ENCODE measurements at regions of chr13 and their contacts with region 1.

Region 1: GRCh38 chr13:114065141-114065925 is 67.1 kb downstream of the RASA3 start:
- DNase-seq: peak; percentile 67 to 87 (median 70)
- ATAC-seq: peak; percentile 94
- H3K4me3 ChIP-seq: peak overlapping the region; percentile 42
- H3K27ac ChIP-seq: peak overlapping the region; percentile 93
- H3K4me1 ChIP-seq: peaks cover 17 to 55% of the 10 kb centered on the region in 2 experiments
- H3K27me3 ChIP-seq: no peaks in the 10 kb centered on the region
- CTCF ChIP-seq: no peak
- EP300 ChIP-seq: 0 out of 2 replicates have a peak, but pooled peaks have one; percentile 12
- POLR2A ChIP-seq: peak; percentile 65; the same call in 1 of the 2 replicates
- RAD21 ChIP-seq: no peak

Region 2: DNA sequence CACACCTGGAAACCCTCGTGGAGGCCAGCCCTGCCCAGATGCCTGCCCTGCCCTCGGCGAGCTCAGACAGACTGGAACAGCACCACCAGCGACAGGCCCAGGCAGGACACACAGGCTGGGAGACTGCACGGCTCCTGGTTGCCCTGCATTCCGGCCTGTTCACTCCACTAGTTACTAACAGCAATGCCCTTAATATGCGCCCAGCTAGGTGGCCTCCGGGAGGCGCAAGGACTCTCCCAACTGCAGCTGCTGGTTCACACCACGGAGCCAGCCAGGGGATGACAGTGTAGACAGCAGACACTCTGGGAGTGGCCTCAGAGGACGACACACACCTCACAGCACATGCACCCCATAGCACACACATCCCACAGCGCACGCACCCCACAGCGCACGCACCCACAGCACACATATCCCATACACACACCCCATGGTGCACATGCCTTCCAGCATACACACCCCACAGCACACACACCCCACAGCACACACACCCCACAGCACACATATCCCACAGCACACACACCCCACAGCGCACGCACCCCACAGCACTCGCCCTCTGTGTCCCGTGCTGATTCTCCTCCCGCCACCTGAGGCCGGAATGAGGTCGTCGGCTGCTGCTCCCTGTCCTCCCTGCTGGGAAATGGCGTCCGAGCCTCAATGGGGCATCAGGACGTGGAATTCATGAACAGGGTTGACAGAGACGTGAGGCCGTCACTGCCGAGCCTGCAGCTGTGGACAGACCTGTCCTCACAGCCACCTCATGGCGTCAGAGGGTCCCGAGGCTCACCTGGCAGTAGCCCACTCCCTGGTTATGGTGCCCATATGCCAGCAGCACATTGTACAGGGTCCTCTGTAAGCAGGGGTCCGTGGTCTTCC is 715.0 kb before region 1 on chr13:
- CTCF ChIA-PET with region 1: no interaction called
- POLR2A ChIA-PET with region 1: no interaction called
- in situ Hi-C with region 1: no loop called
- intact Hi-C with region 1: no loop called
- DNase-seq: no peak
- ATAC-seq: no peak
- H3K4me3 ChIP-seq: no peak overlapping the region
- H3K27ac ChIP-seq: no peak overlapping the region
- H3K4me1 ChIP-seq: peaks cover 0 to 6% of the 10 kb centered on the region in 2 experiments; a peak in 2 of 5 replicates
- H3K27me3 ChIP-seq: no peaks in the 10 kb centered on the region
- CTCF ChIP-seq: no peak
- EP300 ChIP-seq: no peak
- POLR2A ChIP-seq: no peak
- RAD21 ChIP-seq: no peak

Region 3: GRCh38 chr13:114128624-114129522 is 63.5 kb after region 1 on chr13:
- CTCF ChIA-PET with region 1: no interaction called
- POLR2A ChIA-PET with region 1: no interaction called
- in situ Hi-C with region 1: no loop called
- intact Hi-C with region 1: loop called (anchors 2 kb)
- DNase-seq: peak; percentile 58 to 87 (median 78)
- ATAC-seq: peak; percentile 73
- H3K4me3 ChIP-seq: peak overlapping the region; percentile 12; the same call in 1 of the 2 replicates
- H3K27ac ChIP-seq: peak overlapping the region; percentile 80
- H3K4me1 ChIP-seq: peaks cover 34 to 73% of the 10 kb centered on the region in 2 experiments
- H3K27me3 ChIP-seq: no peaks in the 10 kb centered on the region
- CTCF ChIP-seq: no peak
- EP300 ChIP-seq: peak; percentile 44; the same call in 1 of the 2 replicates
- POLR2A ChIP-seq: peak; percentile 65
- RAD21 ChIP-seq: peak in 1 of 2 experiments; percentile 4; a peak in 1 of 4 replicates

Measured in K562 (cell line).